HAP-1 (cell line): ENCODE measurements at regions of chr4 and their contacts with region 1.

Region 1: DNA sequence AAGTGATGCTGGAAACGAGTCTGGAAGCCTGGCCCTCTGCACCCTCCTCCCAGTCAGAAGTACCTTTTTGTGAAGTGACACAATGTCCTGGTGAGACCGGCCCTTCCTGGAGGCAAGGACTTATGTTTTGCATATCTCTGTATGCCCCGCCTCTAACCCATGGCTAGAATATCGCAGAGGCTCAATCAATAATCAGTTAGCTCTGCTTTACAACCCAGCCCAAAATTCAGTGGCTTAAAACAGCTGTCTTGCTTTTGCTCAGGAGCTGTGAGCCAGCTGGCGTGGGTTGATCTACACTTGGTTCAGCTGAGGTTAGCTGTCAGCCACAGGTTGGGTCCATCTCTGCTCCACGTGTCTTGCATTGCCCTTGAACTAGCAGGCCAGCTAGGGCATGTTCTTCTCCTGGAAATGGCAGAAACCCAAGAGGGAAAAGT is 98.8 kb upstream of the METTL14 start:
- DNase-seq: peak in 1 of 2 experiments; percentile 12
- H3K4me3 ChIP-seq: no peak overlapping the region
- H3K4me1 ChIP-seq: peaks cover 11% of the 10 kb centered on the region
- H3K27me3 ChIP-seq: no peaks in the 10 kb centered on the region

Region 2: DNA sequence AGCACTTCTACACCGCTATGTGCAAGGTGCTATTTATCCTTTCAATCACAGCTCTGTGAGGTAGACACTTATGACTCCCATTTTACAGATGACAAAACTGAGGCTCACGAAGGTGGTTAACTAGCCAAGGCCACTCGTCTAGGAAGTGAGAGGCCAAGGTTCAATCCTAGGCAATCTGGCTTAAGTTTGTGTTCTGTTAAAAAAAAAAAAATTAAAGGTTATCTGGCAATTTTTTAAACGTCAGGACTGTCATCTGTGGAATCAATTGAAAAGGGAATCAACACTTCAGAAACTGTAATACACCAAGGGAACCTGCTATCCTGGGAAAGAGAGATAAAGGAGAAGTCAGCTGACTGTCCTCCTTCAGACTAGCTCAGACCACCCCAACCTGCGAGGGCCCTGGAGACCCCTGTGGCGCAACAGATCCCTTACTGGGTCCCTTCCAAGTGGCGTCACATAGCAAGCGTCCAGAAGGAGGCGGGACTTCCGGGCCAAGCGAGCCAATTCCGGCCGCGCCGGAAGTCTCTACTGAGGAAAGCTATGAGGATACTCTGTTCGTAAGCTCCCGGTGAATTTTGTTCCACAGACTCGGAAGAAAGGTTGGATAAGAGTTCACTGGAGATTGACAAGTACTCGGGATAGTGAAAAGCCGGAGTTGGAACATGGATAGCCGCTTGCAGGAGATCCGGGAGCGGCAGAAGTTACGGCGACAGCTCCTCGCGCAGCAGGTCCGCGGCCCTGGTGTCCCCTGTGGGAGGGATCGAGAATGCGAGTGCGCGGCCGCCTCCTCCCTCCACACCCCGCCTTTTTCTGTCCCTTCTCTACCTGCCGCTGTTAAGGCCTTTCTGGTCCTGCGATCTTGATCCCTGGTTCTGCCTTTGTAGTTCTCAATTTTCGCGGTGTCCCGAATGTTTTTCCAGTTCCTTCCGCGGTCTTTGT is 98.8 kb after region 1 on chr4 and contains the start of gene METTL14:
- in situ Hi-C with region 1: loop called (anchors 10 kb)
- DNase-seq: peak; percentile 89 to 96
- H3K4me3 ChIP-seq: peak within 1 kb of the TSS; percentile 79
- H3K4me1 ChIP-seq: peaks cover 15% of the 10 kb centered on the region
- H3K27me3 ChIP-seq: no peaks in the 10 kb centered on the region